CD8-positive, alpha-beta T cell (primary cell): ENCODE measurements at regions of chr1 and their contacts with region 1.

Region 1: DNA sequence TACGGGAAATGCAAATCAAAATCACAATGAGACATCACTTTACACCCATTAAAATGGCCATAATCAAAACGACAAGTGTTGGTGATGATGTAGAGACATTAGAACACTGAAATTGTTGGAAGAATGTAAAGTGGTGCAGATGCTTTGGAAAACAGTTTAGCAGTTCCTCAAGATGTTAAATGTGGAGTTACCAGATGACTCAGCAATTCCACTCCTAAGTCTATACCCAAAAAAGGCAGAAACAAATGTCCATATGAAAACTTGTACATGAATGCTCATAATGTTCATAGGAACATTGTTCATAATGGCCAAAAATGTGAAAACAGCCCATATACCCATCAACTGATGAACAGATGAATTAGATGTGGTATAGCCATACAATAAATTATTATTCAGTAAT is 267.4 kb downstream of the KCNH1 start:
- DNase-seq: no peak
- ATAC-seq: no peak
- H3K4me3 ChIP-seq: no peak overlapping the region
- H3K4me3 Mint-ChIP-seq: no peak overlapping the region
- H3K27ac ChIP-seq: no peak overlapping the region
- H3K27ac Mint-ChIP-seq: no peak overlapping the region
- H3K4me1 ChIP-seq: no peaks in the 10 kb centered on the region
- H3K4me1 Mint-ChIP-seq: no peaks in the 10 kb centered on the region
- H3K27me3 ChIP-seq: no peaks in the 10 kb centered on the region
- H3K27me3 Mint-ChIP-seq: no peaks in the 10 kb centered on the region
- CTCF ChIP-seq: no peak

Region 2: DNA sequence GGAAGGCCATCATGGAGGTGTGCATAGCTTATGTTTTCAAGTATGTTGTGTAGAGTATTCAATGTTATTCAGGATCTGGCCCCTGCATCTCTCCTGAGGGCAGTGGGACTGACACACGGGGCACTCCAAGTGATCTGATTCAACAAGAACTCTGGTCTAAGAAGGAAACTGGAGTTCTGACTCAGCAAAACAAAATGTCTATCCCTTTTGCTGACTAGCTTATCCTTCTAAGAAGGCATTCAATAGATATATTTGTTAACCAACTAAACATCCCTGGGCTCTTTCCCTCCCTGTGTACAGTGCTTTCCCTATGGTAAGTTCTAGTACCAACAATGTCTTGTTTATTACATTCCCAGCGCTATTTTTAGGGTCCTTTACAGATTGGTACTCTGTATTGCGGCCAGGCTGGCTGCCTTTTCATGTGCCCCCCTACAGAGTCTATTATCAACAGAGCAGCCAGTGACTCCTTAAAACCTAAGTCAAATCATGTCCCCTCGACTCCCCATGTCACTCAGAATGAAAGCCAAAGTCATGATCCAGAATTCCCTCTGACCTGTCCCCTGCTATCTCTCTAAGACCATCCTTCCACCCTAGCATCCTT is 37.4 kb before region 1 on chr1:
- CTCF ChIA-PET with region 1: no interaction called
- POLR2A ChIA-PET with region 1: no interaction called
- intact Hi-C with region 1: loop called in 1 of 2 experiments (anchors 1 kb)
- DNase-seq: no peak
- ATAC-seq: no peak
- H3K4me3 ChIP-seq: no peak overlapping the region
- H3K4me3 Mint-ChIP-seq: no peak overlapping the region
- H3K27ac ChIP-seq: no peak overlapping the region
- H3K27ac Mint-ChIP-seq: no peak overlapping the region
- H3K4me1 ChIP-seq: no peaks in the 10 kb centered on the region
- H3K4me1 Mint-ChIP-seq: no peaks in the 10 kb centered on the region
- H3K27me3 ChIP-seq: no peaks in the 10 kb centered on the region
- H3K27me3 Mint-ChIP-seq: peaks cover 15% of the 10 kb centered on the region
- CTCF ChIP-seq: no peak

Region 3: DNA sequence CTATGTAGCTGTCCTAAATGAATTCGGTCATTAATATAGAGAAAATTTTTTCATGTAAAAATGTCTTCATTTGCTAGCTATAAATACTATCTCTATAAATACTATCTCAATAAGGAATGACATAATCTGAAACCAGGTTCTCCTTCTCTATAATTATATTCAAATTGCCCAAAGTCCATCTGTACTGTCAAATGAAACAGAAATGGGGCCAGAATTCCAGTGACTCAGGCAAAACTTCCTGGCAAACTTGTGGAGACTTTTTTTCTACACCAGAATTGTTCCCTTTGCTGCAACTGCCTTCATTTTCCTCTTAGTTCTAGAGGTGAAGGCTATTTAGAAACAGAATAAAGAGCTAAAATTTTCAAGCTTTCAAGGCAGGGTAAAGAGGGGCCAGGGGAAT is 115.0 kb after region 1 on chr1:
- CTCF ChIA-PET with region 1: no interaction called
- POLR2A ChIA-PET with region 1: no interaction called
- intact Hi-C with region 1: no loop called
- DNase-seq: no peak
- ATAC-seq: no peak
- H3K4me3 ChIP-seq: no peak overlapping the region
- H3K4me3 Mint-ChIP-seq: no peak overlapping the region
- H3K27ac ChIP-seq: no peak overlapping the region
- H3K27ac Mint-ChIP-seq: no peak overlapping the region
- H3K4me1 ChIP-seq: no peaks in the 10 kb centered on the region
- H3K4me1 Mint-ChIP-seq: no peaks in the 10 kb centered on the region
- H3K27me3 ChIP-seq: no peaks in the 10 kb centered on the region
- H3K27me3 Mint-ChIP-seq: peaks cover 10% of the 10 kb centered on the region
- CTCF ChIP-seq: no peak